Caco-2 (cell line): ENCODE measurements at regions of chr19 and their contacts with region 1.

Region 1: GRCh38 chr19:34677386-34678084 is at the start of gene ZNF302:
- DNase-seq: peak; percentile 98
- H3K4me3 ChIP-seq: peak within 1 kb of the TSS; percentile 95
- H3K4me3 Mint-ChIP-seq: peak within 1 kb of the TSS; percentile 96
- H3K27ac Mint-ChIP-seq: peak within 1 kb of the TSS; percentile 99
- H3K4me1 ChIP-seq: peaks cover 16% of the 10 kb centered on the region
- H3K4me1 Mint-ChIP-seq: peaks cover 9% of the 10 kb centered on the region
- H3K27me3 ChIP-seq: no peaks in the 10 kb centered on the region
- H3K27me3 Mint-ChIP-seq: peaks cover 3% of the 10 kb centered on the region
- CTCF ChIP-seq: no peak
- total RNA-seq, gene ZNF302: 28.1 and 30.1 TPM in 2 replicates

Region 2: GRCh38 chr19:34327851-34328250 is 349.7 kb before region 1 on chr19:
- CTCF ChIA-PET with region 1: no interaction called
- POLR2A ChIA-PET with region 1: no interaction called
- intact Hi-C with region 1: no loop called
- DNase-seq: no peak
- H3K4me3 ChIP-seq: no peak overlapping the region
- H3K4me3 Mint-ChIP-seq: no peak overlapping the region
- H3K27ac Mint-ChIP-seq: no peak overlapping the region
- H3K4me1 ChIP-seq: no peaks in the 10 kb centered on the region
- H3K4me1 Mint-ChIP-seq: peaks cover 9% of the 10 kb centered on the region
- H3K27me3 ChIP-seq: no peaks in the 10 kb centered on the region
- H3K27me3 Mint-ChIP-seq: no peaks in the 10 kb centered on the region
- CTCF ChIP-seq: no peak

Region 3: DNA sequence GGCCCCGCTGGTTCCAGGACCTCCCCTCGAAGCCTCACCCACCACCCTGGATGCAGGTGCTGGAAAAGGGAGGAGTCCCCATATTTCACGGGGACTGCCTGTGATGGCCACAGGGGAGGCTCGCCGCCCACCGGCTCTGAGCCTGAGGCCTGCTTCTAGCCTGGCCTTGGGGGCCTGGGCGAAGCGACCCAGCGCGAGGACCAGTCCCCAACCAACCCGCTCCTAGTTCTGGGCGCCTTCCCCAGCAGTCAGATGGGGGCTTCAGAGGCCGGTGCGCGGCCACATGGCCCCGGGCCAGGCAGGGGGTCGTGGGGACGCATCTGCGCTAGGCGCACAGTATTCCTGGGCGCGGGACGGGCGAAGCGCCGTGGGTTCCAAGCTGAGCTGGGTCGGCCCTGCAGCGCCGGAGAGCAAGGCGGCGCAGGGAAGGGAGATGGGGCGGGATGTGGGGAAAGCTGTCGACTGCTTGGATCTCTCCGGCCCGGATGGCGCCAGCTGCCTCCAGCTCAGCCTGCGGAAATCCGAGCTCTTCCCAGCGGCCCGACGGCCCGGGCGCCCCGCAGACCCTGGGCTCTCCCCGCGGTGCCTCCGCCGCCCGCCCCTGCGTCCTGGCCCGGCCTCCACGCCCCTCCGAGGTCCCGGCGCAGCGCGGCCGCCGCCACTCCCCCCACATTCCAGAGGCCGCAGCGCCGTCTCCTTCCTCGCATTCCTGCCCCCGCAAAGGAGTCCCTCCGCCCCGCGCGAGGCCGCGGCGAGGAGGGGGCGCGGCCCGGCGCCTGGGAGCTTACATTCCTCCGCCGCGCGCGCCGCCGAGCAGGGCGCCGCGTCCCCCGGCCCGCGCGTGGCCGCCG is 196.3 kb before region 1 on chr19 and contains the start of gene WTIP:
- CTCF ChIA-PET with region 1: no interaction called
- POLR2A ChIA-PET with region 1: interaction called, 10 read pairs
- intact Hi-C with region 1: no loop called
- DNase-seq: peak; percentile 93
- H3K4me3 ChIP-seq: peak within 1 kb of the TSS; percentile 77
- H3K4me3 Mint-ChIP-seq: peak within 1 kb of the TSS; percentile 75
- H3K27ac Mint-ChIP-seq: peak within 1 kb of the TSS; percentile 85
- H3K4me1 ChIP-seq: peaks cover 17% of the 10 kb centered on the region
- H3K4me1 Mint-ChIP-seq: peaks cover 27% of the 10 kb centered on the region
- H3K27me3 ChIP-seq: no peaks in the 10 kb centered on the region
- H3K27me3 Mint-ChIP-seq: no peaks in the 10 kb centered on the region
- CTCF ChIP-seq: no peak
- total RNA-seq, gene WTIP: 53.3 and 58.0 TPM in 2 replicates

Region 4: DNA sequence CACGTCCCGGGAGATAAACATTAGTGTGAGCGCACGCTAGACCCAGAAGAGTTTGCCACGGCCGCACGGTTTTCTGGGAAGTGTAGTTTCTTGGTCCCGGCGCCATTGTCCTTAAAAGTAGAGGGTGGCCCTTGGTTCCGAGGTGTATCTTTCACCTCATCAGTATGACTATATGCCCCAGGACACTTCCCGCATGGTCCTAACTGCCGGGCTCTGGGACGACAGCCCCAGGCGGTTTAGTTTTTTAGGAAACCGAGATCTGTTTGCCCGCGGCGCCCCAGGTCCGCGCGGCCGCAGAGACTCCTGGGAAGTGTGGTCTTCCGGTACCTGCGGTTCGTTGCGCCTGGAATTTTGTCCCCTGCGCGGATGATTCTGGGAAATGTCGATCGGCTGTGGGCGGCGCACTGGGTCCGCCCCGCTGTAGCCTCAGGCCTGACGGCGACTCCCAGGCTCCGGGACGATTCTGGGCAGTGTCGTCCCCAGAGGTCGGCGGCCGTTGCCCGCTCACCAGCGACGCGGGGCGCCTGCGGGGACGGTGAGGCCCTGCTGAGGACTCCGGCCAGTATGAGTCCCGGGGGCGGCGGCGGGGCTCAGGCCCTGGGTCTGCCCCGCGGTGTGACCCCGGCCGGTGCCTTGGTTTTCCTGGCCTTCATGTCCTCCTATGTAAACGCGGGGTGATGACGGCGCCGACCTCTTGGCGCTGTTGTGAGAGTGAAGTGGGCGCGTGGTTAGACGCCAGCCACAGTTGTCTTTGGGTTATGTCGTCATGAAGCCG is 56.5 kb after region 1 on chr19 and contains the start of gene ZNF181:
- CTCF ChIA-PET with region 1: no interaction called
- POLR2A ChIA-PET with region 1: interaction called, 7 read pairs
- intact Hi-C with region 1: loop called (anchors 1 kb)
- DNase-seq: peak; percentile 93
- H3K4me3 ChIP-seq: peak within 1 kb of the TSS; percentile 62
- H3K4me3 Mint-ChIP-seq: peak within 1 kb of the TSS; percentile 72
- H3K27ac Mint-ChIP-seq: peak within 1 kb of the TSS; percentile 74
- H3K4me1 ChIP-seq: peaks cover 7% of the 10 kb centered on the region
- H3K4me1 Mint-ChIP-seq: peaks cover 10% of the 10 kb centered on the region
- H3K27me3 ChIP-seq: no peaks in the 10 kb centered on the region
- H3K27me3 Mint-ChIP-seq: no peaks in the 10 kb centered on the region
- CTCF ChIP-seq: no peak
- total RNA-seq, gene ZNF181: 5.4 and 6.2 TPM in 2 replicates

Region 5: GRCh38 chr19:34772697-34773554 is 95.4 kb after region 1 on chr19 and contains the start of gene ZNF599:
- CTCF ChIA-PET with region 1: no interaction called
- POLR2A ChIA-PET with region 1: no interaction called
- intact Hi-C with region 1: loop called (anchors 2 kb)
- DNase-seq: peak; percentile 89 to 90
- H3K4me3 ChIP-seq: peak within 1 kb of the TSS; percentile 63
- H3K4me3 Mint-ChIP-seq: peak within 1 kb of the TSS; percentile 86
- H3K27ac Mint-ChIP-seq: peak within 1 kb of the TSS; percentile 59
- H3K4me1 ChIP-seq: peaks cover 6% of the 10 kb centered on the region; the same call in 1 of the 2 replicates
- H3K4me1 Mint-ChIP-seq: peaks cover 11% of the 10 kb centered on the region
- H3K27me3 ChIP-seq: peaks cover 1% of the 10 kb centered on the region; the same call in 1 of the 2 replicates
- H3K27me3 Mint-ChIP-seq: no peaks in the 10 kb centered on the region
- CTCF ChIP-seq: no peak
- total RNA-seq, gene ZNF599: 5.0 and 6.8 TPM in 2 replicates